RWPE1 (cell line): ENCODE measurements at regions of chr10 and their contacts with region 1.

Region 1: GRCh38 chr10:89029785-89030437 is 39.3 kb downstream of the FAS start:
- DNase-seq: peak; percentile 71
- H3K27ac ChIP-seq: no peak overlapping the region
- CTCF ChIP-seq: peak; percentile 84

Region 2: GRCh38 chr10:88913127-88913526 is 116.8 kb before region 1 on chr10:
- CTCF ChIA-PET with region 1: no interaction called
- POLR2A ChIA-PET with region 1: no interaction called
- DNase-seq: no peak
- H3K27ac ChIP-seq: no peak overlapping the region
- CTCF ChIP-seq: no peak

Region 3: GRCh38 chr10:89207181-89207800 is 177.4 kb after region 1 on chr10 and contains the start of gene CH25H:
- CTCF ChIA-PET with region 1: interaction called, 20 read pairs
- POLR2A ChIA-PET with region 1: no interaction called
- DNase-seq: peak; percentile 62
- H3K27ac ChIP-seq: no peak within 1 kb of the TSS
- CTCF ChIP-seq: no peak

Region 4: DNA sequence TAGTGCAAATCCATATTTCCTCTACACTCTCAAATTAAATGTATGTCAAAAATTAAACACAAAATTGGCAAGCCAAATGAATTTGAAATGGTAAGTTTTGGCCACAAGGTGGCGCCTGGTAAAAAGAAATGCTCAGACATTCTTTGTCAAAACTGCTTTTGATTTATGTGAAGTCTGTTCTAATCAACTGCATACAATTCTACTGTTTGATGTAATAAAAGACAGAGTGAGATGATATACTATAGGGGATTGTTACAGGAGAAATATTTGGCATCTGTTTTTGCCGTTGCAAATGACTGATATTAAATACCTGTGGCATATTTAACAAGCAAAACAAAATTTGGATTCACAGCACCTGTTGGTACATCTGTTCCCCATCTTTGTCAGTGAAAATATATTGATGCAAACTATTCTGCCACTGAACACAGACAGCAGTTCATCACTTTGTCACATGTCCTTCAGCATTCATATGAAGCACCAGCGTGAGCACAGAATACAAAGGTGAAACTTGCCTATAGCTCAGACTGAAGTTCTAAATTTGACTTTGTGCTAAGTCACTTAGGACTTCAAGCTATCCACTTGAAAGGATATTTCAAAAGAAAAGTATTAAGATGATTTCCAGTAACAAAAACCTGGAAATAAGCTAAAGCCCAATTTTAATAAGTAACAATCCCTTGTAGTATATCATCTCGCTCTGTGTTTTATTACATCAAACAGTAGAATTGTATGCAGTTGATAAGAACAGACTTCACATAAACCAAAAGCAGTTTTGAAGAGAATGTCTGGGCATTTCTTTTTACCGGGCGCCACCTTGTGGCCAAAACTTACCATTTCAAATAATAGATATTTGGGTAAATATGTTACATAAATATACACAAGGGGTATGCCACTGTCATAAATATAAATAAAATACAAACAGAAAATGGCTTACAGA is 187.4 kb after region 1 on chr10:
- CTCF ChIA-PET with region 1: interaction called, 17 read pairs
- POLR2A ChIA-PET with region 1: no interaction called
- DNase-seq: no peak
- H3K27ac ChIP-seq: no peak overlapping the region
- CTCF ChIP-seq: peak; percentile 60